HCT116 (cell line): ENCODE measurements at regions of chr7 and their contacts with region 1.

Region 1: DNA sequence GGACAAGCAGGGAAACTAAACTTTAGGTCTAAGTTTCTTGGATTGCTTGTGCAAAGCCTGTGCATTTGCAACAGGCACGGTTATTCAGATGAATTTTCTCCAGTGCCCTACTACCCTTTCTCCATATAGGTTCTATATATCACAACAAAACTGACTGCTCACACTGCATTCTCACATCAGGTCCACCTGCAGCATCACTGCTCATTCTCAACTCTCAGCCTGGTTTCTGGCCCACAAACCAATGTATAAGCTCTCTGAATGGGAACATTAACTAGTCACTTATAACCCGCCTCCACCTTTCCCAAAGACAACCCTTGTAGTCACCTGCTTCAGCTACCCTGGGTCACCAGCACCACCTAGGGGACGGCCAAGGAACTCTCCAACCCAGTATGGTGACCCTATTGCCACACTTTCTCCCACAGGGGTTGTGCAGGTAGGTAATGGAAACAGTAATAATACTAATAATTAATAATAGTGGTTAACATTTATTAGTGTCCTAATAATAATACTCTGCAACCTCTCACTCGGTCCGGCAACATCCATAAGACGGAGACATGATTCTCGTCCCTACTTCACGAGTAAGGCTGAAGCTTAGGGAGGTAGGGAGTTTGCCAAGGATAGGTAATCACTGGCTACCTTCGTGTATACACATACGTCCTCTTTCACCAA is 97.3 kb downstream of the CLEC2L start:
- DNase-seq: peak; percentile 26
- ATAC-seq: peak; percentile 91
- H3K4me3 ChIP-seq: no peak overlapping the region
- H3K27ac ChIP-seq: no peak overlapping the region
- H3K4me1 ChIP-seq: 0 out of 4 replicates have a peak, but pooled peaks cover 0 to 4% of the 10 kb centered on the region in 2 experiments
- H3K27me3 ChIP-seq: no peaks in the 10 kb centered on the region
- CTCF ChIP-seq: peak; percentile 56 to 89 (median 80); a peak in 5 of 6 replicates
- POLR2A ChIP-seq: no peak
- RAD21 ChIP-seq: peak; percentile 70

Region 2: DNA sequence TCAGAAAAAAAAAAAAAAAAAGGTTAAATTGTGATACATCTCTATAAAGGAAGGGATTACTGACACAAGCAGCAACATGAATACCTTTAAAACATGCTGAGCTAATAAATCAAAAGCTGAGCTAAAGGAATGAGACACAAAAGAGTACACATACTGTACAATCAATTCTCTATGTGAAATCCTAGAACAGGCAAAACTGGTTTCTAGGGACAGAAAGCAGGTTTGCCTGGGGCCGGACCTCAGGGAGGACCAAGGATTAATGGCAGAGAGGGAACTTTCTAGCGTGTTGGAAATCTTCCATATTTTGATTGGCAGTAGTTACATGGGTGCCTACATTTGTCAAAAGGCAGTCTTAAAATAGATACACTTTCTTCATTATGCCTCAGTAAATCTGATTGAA is 189.8 kb before region 1 on chr7:
- CTCF ChIA-PET with region 1: interaction called, 7 read pairs
- POLR2A ChIA-PET with region 1: no interaction called
- RAD21 ChIA-PET with region 1: no interaction called
- intact Hi-C with region 1: loop called (anchors 2 kb)
- DNase-seq: peak; percentile 32
- ATAC-seq: peak; percentile 23; the same call in 1 of the 2 replicates
- H3K4me3 ChIP-seq: no peak overlapping the region
- H3K27ac ChIP-seq: peak overlapping the region; percentile 53
- H3K4me1 ChIP-seq: peaks cover 13 to 30% of the 10 kb centered on the region in 2 experiments; a peak in 3 of 4 replicates
- H3K27me3 ChIP-seq: no peaks in the 10 kb centered on the region
- CTCF ChIP-seq: no peak
- POLR2A ChIP-seq: no peak
- RAD21 ChIP-seq: no peak

Region 3: GRCh38 chr7:139505563-139505962 is 115.2 kb before region 1 on chr7:
- CTCF ChIA-PET with region 1: interaction called, 3 read pairs
- POLR2A ChIA-PET with region 1: no interaction called
- RAD21 ChIA-PET with region 1: interaction called in 1 of 2 experiments, 4 read pairs
- intact Hi-C with region 1: loop called (anchors 2 kb)
- DNase-seq: peak; percentile 15
- ATAC-seq: peak; percentile 91
- H3K4me3 ChIP-seq: no peak overlapping the region
- H3K27ac ChIP-seq: no peak overlapping the region
- H3K4me1 ChIP-seq: peaks cover 0 to 3% of the 10 kb centered on the region in 2 experiments; a peak in 2 of 4 replicates
- H3K27me3 ChIP-seq: no peaks in the 10 kb centered on the region
- CTCF ChIP-seq: peak; percentile 48 to 71 (median 66); a peak in 5 of 6 replicates
- POLR2A ChIP-seq: no peak
- RAD21 ChIP-seq: peak; percentile 59

Region 4: GRCh38 chr7:139602143-139602722 is 18.6 kb before region 1 on chr7:
- CTCF ChIA-PET with region 1: interaction called, 10 read pairs
- POLR2A ChIA-PET with region 1: no interaction called
- RAD21 ChIA-PET with region 1: no interaction called
- intact Hi-C with region 1: no loop called
- DNase-seq: peak; percentile 15
- ATAC-seq: peak; percentile 89
- H3K4me3 ChIP-seq: no peak overlapping the region
- H3K27ac ChIP-seq: no peak overlapping the region
- H3K4me1 ChIP-seq: no peaks in the 10 kb centered on the region
- H3K27me3 ChIP-seq: no peaks in the 10 kb centered on the region
- CTCF ChIP-seq: peak; percentile 52 to 62 (median 53); a peak in 5 of 6 replicates
- POLR2A ChIP-seq: no peak
- RAD21 ChIP-seq: peak; percentile 69

Region 5: GRCh38 chr7:139645572-139646523 is 25.0 kb after region 1 on chr7:
- CTCF ChIA-PET with region 1: interaction called, 19 read pairs
- POLR2A ChIA-PET with region 1: no interaction called
- RAD21 ChIA-PET with region 1: no interaction called
- intact Hi-C with region 1: no loop called
- DNase-seq: peak; percentile 63
- ATAC-seq: peak; percentile 96
- H3K4me3 ChIP-seq: no peak overlapping the region
- H3K27ac ChIP-seq: no peak overlapping the region
- H3K4me1 ChIP-seq: peaks cover 0 to 19% of the 10 kb centered on the region in 2 experiments; a peak in 1 of 4 replicates
- H3K27me3 ChIP-seq: no peaks in the 10 kb centered on the region
- CTCF ChIP-seq: peak; percentile 90 to 91 (median 91)
- POLR2A ChIP-seq: no peak
- RAD21 ChIP-seq: peak; percentile 98

Region 6: DNA sequence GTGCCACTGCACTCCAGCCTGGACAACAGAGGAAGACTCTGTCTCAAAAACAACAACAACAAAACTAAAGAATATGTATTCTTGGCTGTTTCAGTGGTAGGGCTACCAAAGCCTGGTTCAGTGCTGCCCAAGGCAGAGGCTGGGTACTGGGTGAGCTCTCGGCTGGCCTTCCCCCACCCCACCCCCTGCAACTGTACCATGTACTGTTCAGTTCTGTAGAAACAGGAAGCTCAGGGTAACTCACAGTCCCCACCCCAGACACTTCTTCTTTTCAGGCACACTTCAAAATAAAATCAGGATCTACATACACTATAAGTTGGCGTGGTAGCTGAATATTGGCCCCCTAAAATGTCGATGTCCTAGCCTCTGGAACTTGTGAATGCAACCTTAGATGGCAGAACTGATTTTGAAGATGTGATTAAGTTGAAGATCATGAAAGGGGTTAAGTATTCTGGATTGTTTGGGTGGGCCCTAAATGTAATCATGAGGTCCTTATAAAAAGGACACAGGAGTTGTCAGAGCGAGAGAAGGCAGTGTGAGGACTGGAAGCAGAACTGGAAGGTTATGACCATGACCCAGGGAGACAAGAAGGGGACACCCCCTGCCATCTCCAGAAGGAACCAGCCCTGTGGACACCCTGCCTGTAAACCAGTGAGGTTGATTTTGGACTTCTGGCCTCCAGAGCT is 239.4 kb after region 1 on chr7:
- CTCF ChIA-PET with region 1: no interaction called
- POLR2A ChIA-PET with region 1: no interaction called
- RAD21 ChIA-PET with region 1: no interaction called
- intact Hi-C with region 1: no loop called
- DNase-seq: no peak
- ATAC-seq: no peak
- H3K4me3 ChIP-seq: no peak overlapping the region
- H3K27ac ChIP-seq: no peak overlapping the region
- H3K4me1 ChIP-seq: no peaks in the 10 kb centered on the region
- H3K27me3 ChIP-seq: no peaks in the 10 kb centered on the region
- CTCF ChIP-seq: no peak
- POLR2A ChIP-seq: no peak
- RAD21 ChIP-seq: no peak